Heart left ventricle (tissue), 16 donors: ENCODE measurements at regions of chr7 and their contacts with region 1.

Region 1: DNA sequence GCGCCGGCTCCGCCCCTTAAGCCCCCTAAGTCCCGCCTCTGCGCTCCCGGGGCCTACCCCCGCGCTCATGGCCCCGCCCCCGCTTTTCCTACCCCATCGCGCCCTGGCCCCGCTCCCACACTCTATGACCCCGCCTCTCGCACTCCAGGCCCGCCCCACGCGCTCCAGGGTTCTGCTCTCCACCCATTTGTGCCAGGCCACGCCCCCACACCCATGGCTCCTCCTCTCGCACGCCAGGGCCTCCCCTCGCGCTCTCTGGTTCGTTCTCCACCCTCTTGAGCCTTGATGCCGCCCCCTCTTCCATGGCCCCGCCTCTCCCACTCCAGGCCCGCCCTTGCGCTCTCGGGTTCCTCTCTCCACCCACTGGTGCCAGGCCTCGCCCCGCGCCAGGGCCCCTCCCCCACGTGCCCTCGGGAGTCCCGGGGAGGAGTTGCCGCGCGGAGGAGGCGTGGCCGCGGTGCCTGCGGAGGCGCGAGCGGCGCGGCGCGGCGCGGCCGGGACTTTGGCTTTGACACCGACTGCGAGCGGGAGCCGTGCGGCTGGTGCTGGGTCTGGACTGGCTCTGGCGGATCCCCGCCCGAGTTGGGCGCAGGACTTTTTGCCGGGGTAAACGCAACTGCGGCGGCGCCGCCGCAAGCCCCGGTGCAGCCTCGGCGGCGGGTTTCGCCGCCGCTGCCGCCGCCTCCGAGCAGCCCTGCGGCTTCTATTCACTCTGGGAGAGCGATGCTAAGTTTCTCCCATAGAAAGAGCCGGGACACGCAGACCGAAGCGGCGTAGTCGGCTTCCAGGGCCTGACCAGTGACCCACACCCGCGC is at the start of gene EEPD1:
- DNase-seq: peak; percentile 100
- ATAC-seq: peak; percentile 98
- H3K4me3 ChIP-seq: peak within 1 kb of the TSS; percentile 57 to 94 (median 85)
- H3K27ac ChIP-seq: peak within 1 kb of the TSS; percentile 45 to 94 (median 83)
- H3K4me1 ChIP-seq: peaks cover 5 to 53% (median 36%) of the 10 kb centered on the region in 12 donors
- H3K27me3 ChIP-seq: no peaks in the 10 kb centered on the region
- CTCF ChIP-seq: peak in 1 of 12 donors; percentile 7
- POLR2A ChIP-seq: peak in 1 of 2 donors; percentile 80
- total RNA-seq, gene EEPD1: 3.7 to 12.2 (median 7.7) TPM

Region 2: GRCh38 chr7:35792873-35793489 is 360.0 kb before region 1 on chr7:
- intact Hi-C with region 1: no loop called
- DNase-seq: peak in 3 of 5 donors; percentile 35 to 48 (median 38)
- ATAC-seq: peak; percentile 81 to 91 (median 86)
- H3K4me3 ChIP-seq: no peak overlapping the region
- H3K27ac ChIP-seq: peak overlapping the region; percentile 8 to 80 (median 58)
- H3K4me1 ChIP-seq: peaks cover 0 to 26% (median 12%) of the 10 kb centered on the region in 12 donors
- H3K27me3 ChIP-seq: no peaks in the 10 kb centered on the region
- CTCF ChIP-seq: no peak
- POLR2A ChIP-seq: no peak

Region 3: GRCh38 chr7:36037121-36037662 is 115.8 kb before region 1 on chr7:
- intact Hi-C with region 1: loop called in 3 of 10 experiments (anchors 5 to 10 kb)
- DNase-seq: peak in 4 of 5 donors; percentile 58 to 73 (median 70)
- ATAC-seq: peak; percentile 74 to 87 (median 79)
- H3K4me3 ChIP-seq: peak overlapping the region in 1 of 12 donors; percentile 36
- H3K27ac ChIP-seq: peak overlapping the region; percentile 56 to 94 (median 84)
- H3K4me1 ChIP-seq: peaks cover 0 to 53% (median 35%) of the 10 kb centered on the region in 12 donors
- H3K27me3 ChIP-seq: no peaks in the 10 kb centered on the region
- CTCF ChIP-seq: peak in 1 of 12 donors; percentile 20
- POLR2A ChIP-seq: no peak

Region 4: DNA sequence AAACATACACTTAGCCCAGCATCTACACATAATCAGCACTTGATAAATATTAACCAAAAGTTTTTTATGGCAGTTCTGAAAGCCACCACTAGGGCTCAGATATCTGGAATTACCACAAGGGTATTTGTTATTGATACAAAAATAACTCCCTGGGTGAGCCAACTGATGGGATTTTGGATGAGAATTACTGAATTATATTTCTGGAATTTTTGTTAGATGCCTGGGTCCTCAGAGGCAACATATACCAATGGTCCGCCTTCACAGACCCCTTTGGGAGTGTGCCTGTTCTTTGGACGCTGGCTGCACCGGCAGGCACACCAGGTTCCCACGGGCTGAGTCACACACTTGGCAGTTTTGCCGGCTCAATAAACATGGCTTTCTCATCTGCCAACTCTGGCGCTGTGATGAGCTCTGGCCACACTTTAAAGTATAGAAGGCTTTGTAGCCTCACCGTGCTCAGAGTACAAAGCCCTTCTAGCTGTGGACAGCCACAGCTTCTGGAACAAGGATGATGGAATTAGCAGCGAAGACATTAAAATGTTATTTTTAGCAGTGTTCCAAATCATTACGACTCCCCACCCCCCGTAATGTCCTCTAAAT is 24.4 kb before region 1 on chr7:
- intact Hi-C with region 1: loop called in 1 of 10 experiments (anchors 1 kb)
- DNase-seq: peak; percentile 72 to 90 (median 77)
- ATAC-seq: peak; percentile 88 to 95 (median 92)
- H3K4me3 ChIP-seq: peak overlapping the region in 5 of 12 donors; percentile 1 to 18 (median 6)
- H3K27ac ChIP-seq: peak overlapping the region; percentile 66 to 90 (median 80)
- H3K4me1 ChIP-seq: peaks cover 0 to 51% (median 28%) of the 10 kb centered on the region in 12 donors
- H3K27me3 ChIP-seq: no peaks in the 10 kb centered on the region
- CTCF ChIP-seq: peak; percentile 54 to 88 (median 72)
- POLR2A ChIP-seq: no peak

Region 5: GRCh38 chr7:36207451-36208291 is 54.7 kb after region 1 on chr7:
- intact Hi-C with region 1: loop called in 2 of 10 experiments (anchors 5 to 10 kb)
- DNase-seq: peak; percentile 42 to 81 (median 59)
- ATAC-seq: peak; percentile 70 to 89 (median 85)
- H3K4me3 ChIP-seq: no peak overlapping the region
- H3K27ac ChIP-seq: peak overlapping the region in 6 of 12 donors; percentile 10 to 70 (median 30)
- H3K4me1 ChIP-seq: peaks cover 6 to 83% (median 54%) of the 10 kb centered on the region in 12 donors
- H3K27me3 ChIP-seq: no peaks in the 10 kb centered on the region
- CTCF ChIP-seq: peak in 5 of 12 donors; percentile 14 to 29 (median 22)
- POLR2A ChIP-seq: no peak

Region 6: GRCh38 chr7:36291387-36292316 is 138.7 kb after region 1 on chr7:
- intact Hi-C with region 1: loop called in 8 of 10 experiments (anchors 2 to 5 kb)
- DNase-seq: peak; percentile 81 to 91 (median 88)
- ATAC-seq: peak; percentile 87 to 94 (median 92)
- H3K4me3 ChIP-seq: peak overlapping the region in 11 of 12 donors; percentile 9 to 59 (median 43)
- H3K27ac ChIP-seq: peak overlapping the region; percentile 8 to 86 (median 80)
- H3K4me1 ChIP-seq: peaks cover 0 to 49% (median 30%) of the 10 kb centered on the region in 12 donors
- H3K27me3 ChIP-seq: no peaks in the 10 kb centered on the region
- CTCF ChIP-seq: peak; percentile 93 to 99 (median 98)
- POLR2A ChIP-seq: no peak